ENCODE measurements at regions of chr1 and their contacts with region 1.

Region 1: GRCh38 chr1:1019122-1019999 is 559 bp upstream of the AGRN start:
- DNase-seq: peak; percentile 93
- H3K4me3 ChIP-seq: peak overlapping the region; percentile 52 to 91 (median 85)
- H3K27ac ChIP-seq: peak overlapping the region; percentile 90 to 98 (median 96)
- H3K4me1 ChIP-seq: peaks cover 0 to 30% (median 26%) of the 10 kb centered on the region in 4 donors
- H3K27me3 ChIP-seq: peaks cover 0 to 4% (median 0%) of the 10 kb centered on the region in 3 donors
- CTCF ChIP-seq: peak in 2 of 4 experiments; percentile 31 to 50
- EP300 ChIP-seq: no peak
- POLR2A ChIP-seq: no peak

Region 2: DNA sequence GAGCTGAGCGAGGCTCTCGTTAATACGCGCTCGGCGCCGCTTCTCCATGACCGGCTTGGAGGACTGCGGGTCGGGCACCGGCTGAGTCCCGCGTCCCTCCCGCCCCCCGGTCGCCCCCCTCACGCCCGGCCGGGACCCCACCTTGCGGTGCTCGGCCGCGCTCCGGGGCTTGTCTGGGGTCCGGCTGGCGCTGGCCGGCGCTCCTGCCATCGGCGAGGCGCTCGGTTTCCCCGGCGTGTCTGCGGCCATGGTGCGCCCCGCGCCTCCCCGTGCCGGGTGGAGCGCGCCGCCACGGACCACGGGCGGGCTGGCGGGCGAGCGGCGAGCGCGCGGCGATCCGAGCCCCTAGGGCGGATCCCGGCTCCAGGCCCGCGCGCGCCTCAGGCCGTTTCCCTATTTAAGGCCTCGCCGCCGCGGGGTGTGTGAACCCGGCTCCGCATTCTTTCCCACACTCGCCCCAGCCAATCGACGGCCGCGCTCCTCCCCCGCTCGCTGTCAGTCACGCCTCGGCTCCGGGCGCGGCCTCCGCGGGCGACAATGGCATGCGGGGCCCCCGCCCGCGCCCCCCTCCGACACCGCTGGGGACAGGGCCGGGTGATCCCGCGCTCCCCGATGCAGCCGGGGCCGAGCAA is 19.5 kb before region 1 on chr1 and contains the start of gene HES4:
- intact Hi-C with region 1: loop called (anchors 1 kb)
- DNase-seq: peak; percentile 97
- H3K4me3 ChIP-seq: peak within 1 kb of the TSS; percentile 58 to 92 (median 60)
- H3K27ac ChIP-seq: peak within 1 kb of the TSS; percentile 89 to 98 (median 96)
- H3K4me1 ChIP-seq: peaks cover 0 to 45% (median 35%) of the 10 kb centered on the region in 4 donors
- H3K27me3 ChIP-seq: peaks cover 0 to 17% (median 5%) of the 10 kb centered on the region in 3 donors
- CTCF ChIP-seq: no peak
- EP300 ChIP-seq: peak in 2 of 4 donors; percentile 25 to 63
- POLR2A ChIP-seq: no peak
- total RNA-seq, gene HES4: 25.0 to 65.1 (median 27.9) TPM

Region 3: GRCh38 chr1:1040004-1040991 is 20.9 kb after region 1 on chr1:
- intact Hi-C with region 1: loop called (anchors 2 kb)
- DNase-seq: peak; percentile 90
- H3K4me3 ChIP-seq: peak overlapping the region; percentile 18 to 57 (median 48)
- H3K27ac ChIP-seq: peak overlapping the region in 2 of 4 donors; percentile 14 to 50
- H3K4me1 ChIP-seq: peaks cover 0 to 23% (median 16%) of the 10 kb centered on the region in 4 donors
- H3K27me3 ChIP-seq: peaks cover 0 to 28% (median 0%) of the 10 kb centered on the region in 3 donors
- CTCF ChIP-seq: peak in 2 of 4 experiments; percentile 21 to 22
- EP300 ChIP-seq: no peak
- POLR2A ChIP-seq: no peak

Region 4: DNA sequence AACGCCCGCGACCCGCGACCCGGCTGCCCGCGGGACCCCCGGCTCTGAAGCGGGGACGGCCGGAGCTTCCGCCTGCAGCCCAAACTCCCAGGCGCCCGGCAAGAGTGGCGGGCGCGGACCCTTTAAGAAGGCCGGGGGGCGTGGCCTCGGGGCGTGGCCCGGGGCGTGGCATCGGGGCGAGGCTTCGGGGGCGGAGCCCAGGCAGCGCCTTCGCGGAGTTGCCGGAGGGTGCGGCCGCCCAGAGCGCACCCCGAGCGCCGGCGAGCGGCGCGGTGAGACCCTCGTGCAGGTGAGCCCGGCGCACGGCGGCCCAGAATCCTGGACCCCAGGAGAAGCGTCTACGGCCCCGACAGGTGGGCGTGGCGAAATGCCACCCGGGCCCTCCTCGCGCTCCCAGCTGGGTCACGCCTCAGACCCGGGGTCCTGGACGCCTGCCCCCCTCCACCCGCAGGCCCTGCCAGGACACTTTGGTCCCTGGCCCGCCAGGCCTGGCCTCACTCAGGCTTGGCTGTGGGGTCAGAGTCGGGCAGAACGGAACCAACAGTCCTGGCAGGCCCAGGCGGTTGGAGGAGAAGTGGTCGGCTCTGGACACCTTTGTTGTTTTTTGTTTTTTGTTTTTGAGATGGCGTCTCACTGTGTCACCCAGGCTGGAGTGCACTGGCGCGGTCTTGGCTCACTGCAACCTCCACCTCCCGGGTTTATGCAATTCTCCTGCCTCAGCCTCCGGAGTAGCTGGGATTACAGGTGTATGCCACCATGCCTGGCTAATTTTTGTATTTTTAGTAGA is 40.3 kb after region 1 on chr1:
- intact Hi-C with region 1: loop called (anchors 5 kb)
- DNase-seq: peak; percentile 91
- H3K4me3 ChIP-seq: peak overlapping the region; percentile 17 to 59 (median 52)
- H3K27ac ChIP-seq: no peak overlapping the region
- H3K4me1 ChIP-seq: peaks cover 0 to 29% (median 22%) of the 10 kb centered on the region in 4 donors
- H3K27me3 ChIP-seq: peaks cover 48 to 81% (median 78%) of the 10 kb centered on the region in 3 donors
- CTCF ChIP-seq: no peak
- EP300 ChIP-seq: no peak
- POLR2A ChIP-seq: no peak

Region 5: GRCh38 chr1:1115786-1116700 is 96.7 kb after region 1 on chr1 and contains the start of gene C1orf159:
- intact Hi-C with region 1: loop called (anchors 5 kb)
- DNase-seq: peak; percentile 99
- H3K4me3 ChIP-seq: peak within 1 kb of the TSS; percentile 69 to 99 (median 93)
- H3K27ac ChIP-seq: peak within 1 kb of the TSS; percentile 74 to 87 (median 82)
- H3K4me1 ChIP-seq: peaks cover 0 to 19% (median 15%) of the 10 kb centered on the region in 4 donors
- H3K27me3 ChIP-seq: peaks cover 0 to 18% (median 0%) of the 10 kb centered on the region in 3 donors
- CTCF ChIP-seq: no peak
- EP300 ChIP-seq: no peak
- POLR2A ChIP-seq: no peak
- total RNA-seq, gene C1orf159: 7.9 to 13.8 (median 10.4) TPM

Region 6: DNA sequence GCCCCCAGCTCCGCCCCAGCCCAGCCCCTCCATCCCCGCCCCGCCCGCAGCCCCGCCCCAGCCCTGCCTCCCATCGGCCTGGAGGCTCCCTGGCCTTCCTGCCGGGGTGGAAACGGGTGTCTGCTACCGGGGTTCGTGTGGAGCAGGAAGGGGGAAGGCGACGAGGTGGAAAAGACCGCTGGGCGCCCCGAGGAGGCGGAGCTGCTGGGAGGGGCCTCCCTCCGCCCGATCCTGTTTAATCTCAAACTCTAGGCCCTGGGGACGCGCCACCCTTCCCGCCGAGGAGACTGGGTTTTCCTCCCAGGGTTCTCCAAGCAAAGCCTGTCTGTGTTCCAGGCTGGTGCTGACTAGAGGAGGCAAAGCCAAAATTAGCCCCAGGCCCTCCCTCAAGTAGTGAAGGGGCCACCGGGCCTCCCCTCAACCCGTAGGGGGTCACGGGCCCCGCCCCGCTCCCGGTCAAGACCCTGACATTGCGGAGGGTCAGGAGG is 138.1 kb after region 1 on chr1:
- intact Hi-C with region 1: no loop called
- DNase-seq: peak; percentile 96
- H3K4me3 ChIP-seq: peak overlapping the region; percentile 53 to 76 (median 70)
- H3K27ac ChIP-seq: peak overlapping the region; percentile 91 to 99 (median 96)
- H3K4me1 ChIP-seq: peaks cover 0 to 18% (median 14%) of the 10 kb centered on the region in 4 donors
- H3K27me3 ChIP-seq: peaks cover 0 to 2% (median 0%) of the 10 kb centered on the region in 3 donors
- CTCF ChIP-seq: no peak
- EP300 ChIP-seq: no peak
- POLR2A ChIP-seq: peak; percentile 30 to 84